AG04450 (cell line): ENCODE measurements at regions of chr1 and their contacts with region 1.

Region 1: GRCh38 chr1:109493805-109494539 is at the start of gene CYB561D1:
- DNase-seq: no peak
- H3K4me3 ChIP-seq: peak within 1 kb of the TSS; percentile 98
- H3K27ac ChIP-seq: peak within 1 kb of the TSS; percentile 11
- H3K27me3 ChIP-seq: no peaks in the 10 kb centered on the region
- CTCF ChIP-seq: peak; percentile 88
- polyA plus RNA-seq, gene CYB561D1: 5.0 and 5.4 TPM in 2 replicates

Region 2: GRCh38 chr1:109509176-109510134 is 15.5 kb after region 1 on chr1 and contains the start of gene AMIGO1:
- CTCF ChIA-PET with region 1: interaction called, 23 read pairs
- POLR2A ChIA-PET with region 1: no interaction called
- DNase-seq: no peak
- H3K4me3 ChIP-seq: peak within 1 kb of the TSS; percentile 72
- H3K27ac ChIP-seq: no peak within 1 kb of the TSS
- H3K27me3 ChIP-seq: peaks cover 7% of the 10 kb centered on the region
- CTCF ChIP-seq: no peak
- polyA plus RNA-seq, gene AMIGO1: 1.5 and 2.3 TPM in 2 replicates

Region 3: DNA sequence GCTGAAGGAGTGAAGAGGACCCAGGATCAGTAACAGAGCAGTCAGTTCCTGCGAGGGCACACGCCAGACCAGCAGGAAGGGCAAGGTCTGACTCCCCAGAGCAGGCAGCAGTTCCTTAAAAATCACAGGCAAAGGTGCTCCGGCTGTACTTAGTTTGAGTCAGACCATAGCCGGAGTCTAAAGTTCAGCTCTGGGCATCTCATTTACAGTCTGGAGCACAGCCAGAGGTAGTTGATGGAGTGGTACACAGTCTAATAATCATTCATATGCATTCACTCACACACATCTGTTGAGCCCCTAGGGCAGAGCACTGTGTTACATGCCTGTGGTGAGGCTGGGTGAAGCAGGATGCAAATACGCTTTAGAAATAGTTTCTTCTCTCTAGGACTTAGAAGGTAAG is 22.9 kb after region 1 on chr1:
- CTCF ChIA-PET with region 1: interaction called, 14 read pairs
- POLR2A ChIA-PET with region 1: no interaction called
- DNase-seq: no peak
- H3K4me3 ChIP-seq: no peak overlapping the region
- H3K27ac ChIP-seq: no peak overlapping the region
- H3K27me3 ChIP-seq: peaks cover 19% of the 10 kb centered on the region
- CTCF ChIP-seq: no peak

Region 4: DNA sequence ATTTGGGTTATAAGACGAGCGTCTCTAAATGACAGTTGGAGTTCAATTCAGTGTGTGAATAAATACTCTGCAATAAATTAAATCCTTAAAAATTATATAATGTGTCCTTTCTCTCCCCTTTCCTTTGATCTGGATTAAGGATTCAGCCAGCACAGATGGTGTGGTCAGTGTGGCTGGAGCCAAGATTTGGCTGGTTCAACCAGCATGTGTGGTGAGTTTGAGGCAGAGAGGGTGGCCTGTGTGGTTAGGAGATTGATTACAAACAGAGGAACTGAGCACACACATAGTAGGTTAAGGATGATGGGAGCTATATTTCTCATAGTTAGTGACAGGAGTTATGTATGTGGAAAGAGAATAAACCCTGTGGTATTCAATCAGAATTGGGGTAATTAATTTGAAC is 29.7 kb after region 1 on chr1:
- CTCF ChIA-PET with region 1: interaction called, 1,351 read pairs
- POLR2A ChIA-PET with region 1: no interaction called
- DNase-seq: no peak
- H3K4me3 ChIP-seq: no peak overlapping the region
- H3K27ac ChIP-seq: no peak overlapping the region
- H3K27me3 ChIP-seq: peaks cover 43% of the 10 kb centered on the region
- CTCF ChIP-seq: no peak